ENCODE measurements at regions of chr1 and their contacts with region 1.

Region 1: DNA sequence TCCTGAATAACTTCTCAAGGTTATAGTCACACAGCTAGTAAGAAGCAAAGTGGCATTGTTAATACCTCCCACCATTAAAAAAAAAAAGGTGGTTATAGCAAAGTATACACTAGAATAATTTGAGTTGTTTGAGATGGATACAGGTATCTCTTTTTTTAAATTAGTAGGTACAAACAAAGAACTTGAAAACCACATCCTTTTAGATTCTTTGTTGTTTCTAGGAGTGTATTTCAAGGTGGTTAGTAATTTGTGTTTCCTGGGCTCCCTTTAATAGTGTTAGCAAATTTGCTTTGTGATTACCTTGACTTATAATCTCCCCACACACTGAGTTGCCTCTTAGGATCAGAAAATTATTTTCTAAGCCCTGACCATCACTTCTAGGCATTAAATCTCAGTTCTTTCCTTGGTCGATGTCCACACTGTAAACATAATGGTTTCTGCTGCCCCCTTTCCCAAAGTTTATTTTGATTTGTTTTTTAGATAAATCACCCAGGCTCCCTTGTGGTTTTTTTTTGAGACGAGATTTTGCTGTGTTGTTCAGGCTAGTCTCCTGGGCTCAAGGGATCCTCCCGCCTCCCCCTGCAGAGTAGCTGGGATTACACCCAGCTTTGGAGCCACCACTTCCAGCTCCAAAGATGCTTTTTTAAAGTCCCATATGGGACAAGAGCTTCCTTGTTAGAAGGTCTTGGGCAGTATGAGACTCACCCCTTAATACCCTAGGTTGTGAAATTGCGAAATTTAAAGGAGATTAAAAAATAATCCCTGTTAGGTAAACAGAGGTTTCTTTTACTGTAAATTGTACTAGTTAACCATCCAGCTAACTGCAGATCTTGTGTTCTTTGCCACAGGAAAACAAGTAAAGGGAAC is 6.2 kb downstream of the AKIRIN1 start:
- DNase-seq: peak in 3 of 14 experiments; percentile 38 to 78 (median 42)
- ATAC-seq: peak; percentile 80
- H3K4me3 ChIP-seq: peak overlapping the region; percentile 10
- H3K4me3 Mint-ChIP-seq: peak overlapping the region; percentile 81
- H3K27ac ChIP-seq: peak overlapping the region; percentile 31 to 42
- H3K27ac Mint-ChIP-seq: peak overlapping the region; percentile 87
- H3K4me1 ChIP-seq: peaks cover 57% of the 10 kb centered on the region
- H3K4me1 Mint-ChIP-seq: peaks cover 71% of the 10 kb centered on the region
- H3K27me3 ChIP-seq: no peaks in the 10 kb centered on the region
- H3K27me3 Mint-ChIP-seq: no peaks in the 10 kb centered on the region
- CTCF ChIP-seq: no peak

Region 2: DNA sequence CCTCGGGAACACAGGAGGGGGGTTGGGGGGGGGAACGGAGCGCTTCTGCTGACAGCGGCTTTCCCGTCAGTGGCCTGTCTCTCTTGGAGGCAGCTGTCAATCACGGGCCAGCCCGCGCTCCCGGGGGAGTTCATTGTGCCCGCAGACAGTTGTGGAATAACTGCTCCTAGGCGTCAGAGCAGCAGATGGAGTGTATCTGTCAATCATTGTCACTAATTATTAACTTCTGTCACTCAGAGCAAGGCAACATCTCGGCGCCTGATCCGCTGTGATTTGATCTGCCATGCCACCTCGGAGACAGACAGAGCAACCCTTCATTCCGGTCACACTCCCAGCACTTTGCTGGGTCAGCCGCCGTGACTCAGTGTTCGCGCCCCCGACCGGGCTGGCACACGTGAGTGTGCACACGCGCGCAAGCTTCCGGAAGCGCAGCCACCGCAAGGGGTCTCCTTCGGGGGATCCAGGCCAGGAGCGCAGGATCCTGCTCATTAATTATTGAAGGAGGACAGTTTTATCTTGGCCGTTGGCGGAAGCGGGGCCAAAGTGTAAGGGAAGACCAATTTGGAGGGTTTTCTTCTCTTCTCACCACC is 213.5 kb before region 1 on chr1:
- CTCF ChIA-PET with region 1: no interaction called
- POLR2A ChIA-PET with region 1: no interaction called
- intact Hi-C with region 1: no loop called
- DNase-seq: no peak
- ATAC-seq: no peak
- H3K4me3 ChIP-seq: no peak overlapping the region
- H3K4me3 Mint-ChIP-seq: no peak overlapping the region
- H3K27ac ChIP-seq: no peak overlapping the region
- H3K27ac Mint-ChIP-seq: no peak overlapping the region
- H3K4me1 ChIP-seq: no peaks in the 10 kb centered on the region
- H3K4me1 Mint-ChIP-seq: no peaks in the 10 kb centered on the region
- H3K27me3 ChIP-seq: peaks cover 31 to 55% of the 10 kb centered on the region in 2 experiments
- H3K27me3 Mint-ChIP-seq: peaks cover 85% of the 10 kb centered on the region
- CTCF ChIP-seq: no peak

Region 3: DNA sequence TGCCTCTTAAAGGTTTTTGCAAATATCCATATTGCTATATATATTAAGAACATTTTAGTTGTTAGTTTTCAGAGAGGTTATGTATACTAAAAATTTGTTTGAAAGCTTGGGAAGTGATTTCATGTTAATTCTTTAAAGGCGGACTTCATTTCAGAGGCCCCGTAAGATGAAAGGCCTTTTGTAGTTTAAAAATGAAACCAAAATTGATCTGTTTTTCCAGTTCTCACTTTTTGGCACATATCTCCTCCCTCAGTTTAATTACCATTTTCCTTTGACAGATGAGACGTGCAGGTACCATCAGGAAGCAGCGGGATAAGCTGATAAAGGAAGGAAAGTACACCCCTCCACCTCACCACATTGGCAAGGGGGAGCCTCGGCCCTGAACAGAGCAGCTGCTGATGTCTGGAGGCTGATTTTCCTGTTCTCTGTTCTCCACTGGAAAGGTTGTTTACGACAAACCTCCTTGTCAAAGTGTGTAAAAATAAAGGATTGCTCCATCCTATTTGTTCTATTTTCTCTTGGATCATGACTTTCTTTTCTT is 36.9 kb after region 1 on chr1:
- CTCF ChIA-PET with region 1: no interaction called
- POLR2A ChIA-PET with region 1: no interaction called
- intact Hi-C with region 1: loop called in 1 of 2 experiments (anchors 2 kb)
- DNase-seq: peak in 4 of 14 experiments; percentile 13 to 59 (median 50)
- ATAC-seq: peak; percentile 57
- H3K4me3 ChIP-seq: peak overlapping the region; percentile 49
- H3K4me3 Mint-ChIP-seq: peak overlapping the region; percentile 91
- H3K27ac ChIP-seq: peak overlapping the region; percentile 61 to 79
- H3K27ac Mint-ChIP-seq: peak overlapping the region; percentile 99
- H3K4me1 ChIP-seq: peaks cover 27% of the 10 kb centered on the region
- H3K4me1 Mint-ChIP-seq: peaks cover 40% of the 10 kb centered on the region
- H3K27me3 ChIP-seq: no peaks in the 10 kb centered on the region
- H3K27me3 Mint-ChIP-seq: no peaks in the 10 kb centered on the region
- CTCF ChIP-seq: no peak